Right cardiac atrium (tissue), 5 donors: ENCODE measurements at regions of chr2 and their contacts with region 1.

Region 1: GRCh38 chr2:209761566-209761965 is 10.1 kb upstream of the UNC80 start:
- DNase-seq: no peak
- ATAC-seq: no peak
- H3K4me3 ChIP-seq: no peak overlapping the region
- H3K27ac ChIP-seq: no peak overlapping the region
- H3K4me1 ChIP-seq: no peaks in the 10 kb centered on the region
- H3K27me3 ChIP-seq: no peaks in the 10 kb centered on the region

Region 2: DNA sequence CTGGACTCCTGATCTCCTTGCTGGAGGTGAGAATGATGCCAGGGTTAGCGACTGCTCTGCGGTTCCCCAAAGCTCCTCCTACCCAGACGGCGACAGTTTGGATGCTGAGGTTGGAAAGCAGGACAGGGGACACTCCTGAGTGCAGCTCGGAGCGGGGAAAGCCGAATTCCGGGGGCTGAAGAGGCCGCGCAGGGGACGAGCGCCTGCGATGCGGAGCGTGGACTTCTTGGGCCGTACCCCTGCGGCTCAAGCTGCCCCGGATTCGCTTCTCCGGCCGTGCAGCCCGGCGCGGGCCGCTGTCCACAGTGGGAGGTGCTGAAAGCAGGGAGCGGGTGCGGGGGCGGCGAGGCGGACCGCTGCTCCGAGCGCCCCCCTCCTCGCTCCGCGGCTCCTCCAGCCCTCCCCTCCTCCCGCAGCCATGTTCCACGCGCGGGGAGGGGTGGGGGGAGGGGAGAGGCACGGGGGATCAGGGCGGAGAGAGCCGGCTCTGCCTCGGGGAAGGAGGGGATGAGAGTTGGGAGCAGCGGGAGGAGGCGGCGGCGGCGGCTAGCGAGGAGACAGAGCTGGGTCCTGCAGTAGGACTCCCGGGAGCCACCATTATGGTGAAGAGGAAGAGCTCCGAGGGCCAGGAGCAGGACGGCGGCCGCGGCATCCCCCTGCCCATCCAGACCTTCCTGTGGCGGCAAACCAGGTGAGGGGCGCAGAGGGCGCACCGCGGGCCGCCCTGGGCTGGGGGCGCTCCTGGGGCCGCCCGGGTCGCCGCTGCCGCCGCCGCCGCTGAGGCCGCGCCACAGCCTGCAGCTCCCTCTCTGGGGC is 10.1 kb after region 1 on chr2 and contains the start of gene UNC80:
- intact Hi-C with region 1: loop called in 1 of 4 experiments (anchors 2 kb)
- DNase-seq: peak; percentile 58 to 88 (median 84)
- ATAC-seq: peak; percentile 93 to 95
- H3K4me3 ChIP-seq: peak within 1 kb of the TSS; percentile 43
- H3K27ac ChIP-seq: no peak within 1 kb of the TSS
- H3K4me1 ChIP-seq: no peaks in the 10 kb centered on the region
- H3K27me3 ChIP-seq: no peaks in the 10 kb centered on the region
- total RNA-seq, gene UNC80: 0.06 to 0.20 (median 0.12) TPM in 3 of 4 donors, not detected in the other